ENCODE measurements at regions of chr12 and their contacts with region 1.

Region 1: DNA sequence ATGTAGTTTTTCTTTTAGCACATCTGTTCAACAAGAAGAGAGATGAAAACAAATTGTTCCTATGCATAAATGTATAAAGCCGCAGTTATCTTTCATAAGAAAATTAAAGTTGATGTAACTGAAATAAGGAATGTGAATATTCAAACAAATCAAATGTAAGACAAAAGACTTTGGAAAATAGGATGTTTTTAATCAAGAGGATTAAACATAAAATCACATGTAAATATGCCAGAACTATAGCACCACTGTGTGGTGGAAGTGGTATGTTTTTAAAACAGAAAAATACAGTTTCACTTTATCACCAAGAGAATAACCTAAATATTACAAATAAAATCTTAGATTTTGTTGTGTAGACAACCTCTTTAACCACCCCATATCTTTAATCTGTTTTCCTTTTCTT is 40.4 kb downstream of the CAPS2 start:
- DNase-seq: no peak
- H3K4me3 Mint-ChIP-seq: no peak overlapping the region
- H3K27ac Mint-ChIP-seq: no peak overlapping the region
- H3K4me1 Mint-ChIP-seq: no peaks in the 10 kb centered on the region
- H3K27me3 Mint-ChIP-seq: no peaks in the 10 kb centered on the region

Region 2: DNA sequence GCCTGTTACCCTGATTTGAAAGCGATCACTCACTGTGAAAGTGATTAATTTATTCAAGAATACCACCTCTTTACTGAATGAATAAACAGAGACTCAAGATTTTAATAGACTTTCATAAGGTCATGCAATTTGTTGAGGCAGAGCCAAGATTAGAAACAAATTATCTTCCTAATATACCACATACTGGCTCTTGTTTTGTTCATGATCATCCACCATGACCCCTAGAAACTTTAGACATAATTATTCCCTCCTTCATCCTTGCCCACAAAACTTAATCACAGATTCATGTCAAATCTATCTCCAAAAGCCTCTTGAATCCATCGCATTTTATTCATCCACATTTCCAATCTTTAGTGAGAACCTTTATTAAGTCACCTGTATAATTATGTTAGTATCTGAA is 599.8 kb before region 1 on chr12:
- intact Hi-C with region 1: loop called (anchors 5 kb)
- DNase-seq: no peak
- H3K4me3 Mint-ChIP-seq: no peak overlapping the region
- H3K27ac Mint-ChIP-seq: no peak overlapping the region
- H3K4me1 Mint-ChIP-seq: no peaks in the 10 kb centered on the region
- H3K27me3 Mint-ChIP-seq: no peaks in the 10 kb centered on the region

Measured in activated CD4-positive, alpha-beta T cell treated with anti-CD3 and anti-CD28 coated beads, Interleukin-2, amount 10 ng/mL, durations not matched to agents 24 days and 14 days (primary cell).